ENCODE measurements at regions of chr5 and their contacts with region 1.

Region 1: GRCh38 chr5:143662020-143662419 is 149.9 kb upstream of the HMHB1 start:
- DNase-seq: no peak
- ATAC-seq: no peak
- H3K4me3 ChIP-seq: no peak overlapping the region
- H3K27ac ChIP-seq: peak overlapping the region; percentile 16 to 69; a peak in 4 of 6 replicates
- H3K4me1 ChIP-seq: peaks cover 61% of the 10 kb centered on the region
- CTCF ChIP-seq: no peak
- EP300 ChIP-seq: no peak
- POLR2A ChIP-seq: no peak
- RAD21 ChIP-seq: no peak

Region 2: DNA sequence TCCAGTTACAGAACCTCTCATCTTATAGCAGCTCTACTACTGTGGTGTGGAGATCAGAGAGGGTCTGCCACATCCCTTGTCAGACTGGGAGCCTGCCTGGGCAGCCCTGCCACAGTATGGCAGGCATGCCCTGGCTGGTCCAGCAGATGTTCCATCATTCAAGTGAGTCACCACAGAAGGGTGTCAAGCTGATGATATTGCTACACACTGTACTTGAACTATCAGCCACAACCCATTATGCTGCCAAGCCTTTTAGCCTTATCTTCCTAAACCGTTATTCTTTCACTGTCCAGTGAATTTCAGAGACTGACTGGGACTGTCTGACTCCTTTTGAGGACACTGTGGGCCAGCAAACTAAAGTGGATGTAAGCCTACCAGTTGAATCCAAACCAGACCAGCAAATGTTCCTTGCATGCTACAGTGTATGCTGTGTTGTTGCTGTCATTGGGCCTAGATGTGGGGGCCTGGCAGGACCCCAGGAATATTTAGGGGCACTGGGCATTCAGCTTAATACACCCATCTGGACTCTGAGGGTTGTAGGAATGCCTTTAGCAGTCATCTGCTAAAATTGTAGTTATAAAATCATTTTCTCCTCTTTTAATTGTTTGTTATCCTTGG is 461.1 kb before region 1 on chr5:
- CTCF ChIA-PET with region 1: no interaction called
- POLR2A ChIA-PET with region 1: no interaction called
- DNase-seq: peak in 1 of 2 experiments; percentile 41
- ATAC-seq: peak; percentile 81 to 88; a peak in 5 of 6 replicates
- H3K4me3 ChIP-seq: no peak overlapping the region
- H3K27ac ChIP-seq: peak overlapping the region; percentile 42 to 66; a peak in 5 of 6 replicates
- H3K4me1 ChIP-seq: peaks cover 14% of the 10 kb centered on the region; the same call in 2 of the 3 replicates
- CTCF ChIP-seq: no peak
- EP300 ChIP-seq: no peak
- POLR2A ChIP-seq: no peak
- RAD21 ChIP-seq: no peak

Region 3: GRCh38 chr5:143693651-143694252 is 31.7 kb after region 1 on chr5:
- CTCF ChIA-PET with region 1: no interaction called
- POLR2A ChIA-PET with region 1: interaction called, 11 read pairs
- DNase-seq: no peak
- ATAC-seq: no peak
- H3K4me3 ChIP-seq: no peak overlapping the region
- H3K27ac ChIP-seq: no peak overlapping the region
- H3K4me1 ChIP-seq: no peaks in the 10 kb centered on the region
- CTCF ChIP-seq: no peak
- EP300 ChIP-seq: no peak
- POLR2A ChIP-seq: no peak
- RAD21 ChIP-seq: no peak

Measured in A549 (cell line).